ENCODE measurements at regions of chr9 and their contacts with region 1.

Region 1: GRCh38 chr9:36407122-36407723 is 7.2 kb upstream of the RNF38 start:
- DNase-seq: peak; percentile 67 to 73 (median 71)
- H3K4me3 ChIP-seq: no peak overlapping the region
- H3K4me3 Mint-ChIP-seq: no peak overlapping the region
- H3K27ac ChIP-seq: peak overlapping the region; percentile 15
- H3K27ac Mint-ChIP-seq: peak overlapping the region; percentile 33 to 92 (median 70)
- H3K4me1 ChIP-seq: peaks cover 9% of the 10 kb centered on the region
- H3K4me1 Mint-ChIP-seq: peaks cover 11 to 27% (median 19%) of the 10 kb centered on the region in 4 donors
- H3K27me3 ChIP-seq: no peaks in the 10 kb centered on the region
- H3K27me3 Mint-ChIP-seq: no peaks in the 10 kb centered on the region

Region 2: GRCh38 chr9:36357639-36358038 is 49.6 kb before region 1 on chr9:
- CTCF ChIA-PET with region 1: no interaction called
- POLR2A ChIA-PET with region 1: no interaction called
- intact Hi-C with region 1: no loop called
- DNase-seq: no peak
- H3K4me3 ChIP-seq: no peak overlapping the region
- H3K4me3 Mint-ChIP-seq: no peak overlapping the region
- H3K27ac ChIP-seq: no peak overlapping the region
- H3K27ac Mint-ChIP-seq: peak overlapping the region in 3 of 7 donors; percentile 18 to 43 (median 41)
- H3K4me1 ChIP-seq: no peaks in the 10 kb centered on the region
- H3K4me1 Mint-ChIP-seq: peaks cover 4 to 14% (median 5%) of the 10 kb centered on the region in 4 donors
- H3K27me3 ChIP-seq: no peaks in the 10 kb centered on the region
- H3K27me3 Mint-ChIP-seq: no peaks in the 10 kb centered on the region

Region 3: DNA sequence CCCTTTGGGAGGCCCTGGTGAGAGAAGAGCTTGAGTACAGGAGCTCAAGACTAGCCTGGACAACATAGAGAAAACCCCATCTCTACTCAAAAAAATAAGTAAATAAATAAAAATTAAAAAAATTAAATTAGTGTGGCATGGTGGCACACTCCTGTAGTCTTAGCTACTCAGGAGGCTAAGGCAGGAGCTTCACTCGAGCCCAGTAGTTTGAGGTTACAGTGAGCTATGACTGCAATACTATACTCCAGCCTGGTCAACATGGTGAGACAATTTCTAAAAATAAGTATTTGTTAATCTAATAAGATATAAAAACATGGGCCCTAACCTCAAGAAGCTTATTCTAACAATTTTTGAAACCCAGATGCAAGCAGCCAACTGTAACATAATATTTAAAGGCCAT is 14.7 kb before region 1 on chr9:
- CTCF ChIA-PET with region 1: interaction called, 22 read pairs
- POLR2A ChIA-PET with region 1: no interaction called
- intact Hi-C with region 1: no loop called
- DNase-seq: no peak
- H3K4me3 ChIP-seq: no peak overlapping the region
- H3K4me3 Mint-ChIP-seq: no peak overlapping the region
- H3K27ac ChIP-seq: no peak overlapping the region
- H3K27ac Mint-ChIP-seq: peak overlapping the region in 1 of 7 donors; percentile 55
- H3K4me1 ChIP-seq: peaks cover 73% of the 10 kb centered on the region
- H3K4me1 Mint-ChIP-seq: peaks cover 58 to 85% (median 73%) of the 10 kb centered on the region in 4 donors
- H3K27me3 ChIP-seq: no peaks in the 10 kb centered on the region
- H3K27me3 Mint-ChIP-seq: no peaks in the 10 kb centered on the region

Region 4: GRCh38 chr9:36436909-36437308 is 29.7 kb after region 1 on chr9:
- CTCF ChIA-PET with region 1: interaction called, 77 read pairs
- POLR2A ChIA-PET with region 1: interaction called, 3 read pairs
- intact Hi-C with region 1: no loop called
- DNase-seq: no peak
- H3K4me3 ChIP-seq: no peak overlapping the region
- H3K4me3 Mint-ChIP-seq: no peak overlapping the region
- H3K27ac ChIP-seq: no peak overlapping the region
- H3K27ac Mint-ChIP-seq: peak overlapping the region in 2 of 7 donors; percentile 48 to 83
- H3K4me1 ChIP-seq: peaks cover 9% of the 10 kb centered on the region
- H3K4me1 Mint-ChIP-seq: peaks cover 17 to 46% (median 33%) of the 10 kb centered on the region in 4 donors
- H3K27me3 ChIP-seq: no peaks in the 10 kb centered on the region
- H3K27me3 Mint-ChIP-seq: no peaks in the 10 kb centered on the region

Region 5: GRCh38 chr9:36450110-36450732 is 43.0 kb after region 1 on chr9:
- CTCF ChIA-PET with region 1: interaction called, 80 read pairs
- POLR2A ChIA-PET with region 1: interaction called, 5 read pairs
- intact Hi-C with region 1: loop called (anchors 1 kb)
- DNase-seq: peak in 4 of 5 donors; percentile 24 to 30 (median 29)
- H3K4me3 ChIP-seq: no peak overlapping the region
- H3K4me3 Mint-ChIP-seq: no peak overlapping the region
- H3K27ac ChIP-seq: no peak overlapping the region
- H3K27ac Mint-ChIP-seq: peak overlapping the region in 2 of 7 donors; percentile 12 to 29
- H3K4me1 ChIP-seq: peaks cover 20% of the 10 kb centered on the region
- H3K4me1 Mint-ChIP-seq: peaks cover 16 to 32% (median 25%) of the 10 kb centered on the region in 4 donors
- H3K27me3 ChIP-seq: no peaks in the 10 kb centered on the region
- H3K27me3 Mint-ChIP-seq: no peaks in the 10 kb centered on the region

Region 6: GRCh38 chr9:36487482-36488388 is 80.5 kb after region 1 on chr9:
- CTCF ChIA-PET with region 1: interaction called, 23 read pairs
- POLR2A ChIA-PET with region 1: interaction called, 50 read pairs
- intact Hi-C with region 1: no loop called
- DNase-seq: peak; percentile 90 to 95 (median 92)
- H3K4me3 ChIP-seq: peak overlapping the region; percentile 18 to 85
- H3K4me3 Mint-ChIP-seq: peak overlapping the region; percentile 93 to 98 (median 96)
- H3K27ac ChIP-seq: peak overlapping the region; percentile 89
- H3K27ac Mint-ChIP-seq: peak overlapping the region; percentile 97 to 99 (median 98)
- H3K4me1 ChIP-seq: peaks cover 58% of the 10 kb centered on the region
- H3K4me1 Mint-ChIP-seq: peaks cover 42 to 80% (median 59%) of the 10 kb centered on the region in 4 donors
- H3K27me3 ChIP-seq: no peaks in the 10 kb centered on the region
- H3K27me3 Mint-ChIP-seq: no peaks in the 10 kb centered on the region

Region 7: GRCh38 chr9:36560857-36561221 is 153.6 kb after region 1 on chr9:
- CTCF ChIA-PET with region 1: interaction called, 505 read pairs
- POLR2A ChIA-PET with region 1: interaction called, 18 read pairs
- intact Hi-C with region 1: no loop called
- DNase-seq: no peak
- H3K4me3 ChIP-seq: no peak overlapping the region
- H3K4me3 Mint-ChIP-seq: no peak overlapping the region
- H3K27ac ChIP-seq: no peak overlapping the region
- H3K27ac Mint-ChIP-seq: no peak overlapping the region
- H3K4me1 ChIP-seq: no peaks in the 10 kb centered on the region
- H3K4me1 Mint-ChIP-seq: peaks cover 0 to 2% (median under 1%) of the 10 kb centered on the region in 4 donors
- H3K27me3 ChIP-seq: no peaks in the 10 kb centered on the region
- H3K27me3 Mint-ChIP-seq: no peaks in the 10 kb centered on the region